Head of caudate nucleus (tissue), 42 donors: ENCODE measurements at regions of chr1 and their contacts with region 1.

Region 1: GRCh38 chr1:201114236-201115131 is 2.3 kb upstream of the CACNA1S start:
- DNase-seq: peak; percentile 75 to 96 (median 88)

Region 2: GRCh38 chr1:200971955-200972711 is 142.4 kb before region 1 on chr1:
- intact Hi-C with region 1: loop called (anchors 5 kb)
- DNase-seq: peak; percentile 59 to 89 (median 76)

Region 3: DNA sequence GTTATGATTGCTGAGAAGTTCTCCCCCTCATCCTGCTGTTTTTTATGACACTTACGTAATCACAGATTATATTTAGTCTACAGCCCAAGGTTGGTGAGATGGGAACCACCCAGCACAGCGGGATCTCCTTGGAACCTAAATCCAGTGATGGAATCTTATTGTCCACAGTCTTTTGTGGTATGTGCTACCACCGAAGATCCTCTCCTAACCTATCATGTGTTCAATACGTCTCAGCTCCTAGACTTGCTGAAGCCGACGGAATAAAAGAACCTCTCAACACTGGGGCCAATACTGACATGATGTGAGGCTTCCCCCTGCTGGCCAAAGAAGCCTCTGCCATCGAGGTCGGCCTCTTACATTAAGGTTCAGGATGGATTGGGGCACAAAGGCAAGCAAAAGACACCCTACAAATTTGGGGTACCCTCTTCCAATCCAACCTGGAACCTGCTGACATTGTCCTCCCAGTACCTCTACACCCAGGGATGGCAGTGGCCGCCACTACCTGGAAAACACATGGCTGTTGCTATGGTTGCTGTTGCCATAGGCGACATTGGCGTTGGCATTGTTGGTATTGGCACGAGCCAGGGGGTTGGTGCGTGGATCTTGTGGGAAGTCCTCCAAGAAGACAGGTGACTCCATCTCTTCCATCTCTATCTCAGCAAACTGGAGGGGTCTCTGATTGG is 71.6 kb before region 1 on chr1:
- intact Hi-C with region 1: loop called (anchors 10 kb)
- DNase-seq: peak; percentile 54 to 91 (median 80)